ENCODE measurements at regions of chr7 and their contacts with region 1.

Region 1: GRCh38 chr7:39948956-39949928 is 814 bp upstream of the CDK13 start:
- DNase-seq: peak; percentile 98
- ATAC-seq: peak; percentile 80
- H3K4me3 ChIP-seq: peak overlapping the region; percentile 93
- H3K27ac ChIP-seq: peak overlapping the region; percentile 98
- H3K4me1 ChIP-seq: peaks cover 9% of the 10 kb centered on the region; the same call in 1 of the 2 replicates
- H3K27me3 ChIP-seq: no peaks in the 10 kb centered on the region
- CTCF ChIP-seq: no peak
- EP300 ChIP-seq: peak in 1 of 2 experiments; percentile 7; a peak in 1 of 4 replicates
- POLR2A ChIP-seq: peak; percentile 98
- RAD21 ChIP-seq: no peak

Region 2: DNA sequence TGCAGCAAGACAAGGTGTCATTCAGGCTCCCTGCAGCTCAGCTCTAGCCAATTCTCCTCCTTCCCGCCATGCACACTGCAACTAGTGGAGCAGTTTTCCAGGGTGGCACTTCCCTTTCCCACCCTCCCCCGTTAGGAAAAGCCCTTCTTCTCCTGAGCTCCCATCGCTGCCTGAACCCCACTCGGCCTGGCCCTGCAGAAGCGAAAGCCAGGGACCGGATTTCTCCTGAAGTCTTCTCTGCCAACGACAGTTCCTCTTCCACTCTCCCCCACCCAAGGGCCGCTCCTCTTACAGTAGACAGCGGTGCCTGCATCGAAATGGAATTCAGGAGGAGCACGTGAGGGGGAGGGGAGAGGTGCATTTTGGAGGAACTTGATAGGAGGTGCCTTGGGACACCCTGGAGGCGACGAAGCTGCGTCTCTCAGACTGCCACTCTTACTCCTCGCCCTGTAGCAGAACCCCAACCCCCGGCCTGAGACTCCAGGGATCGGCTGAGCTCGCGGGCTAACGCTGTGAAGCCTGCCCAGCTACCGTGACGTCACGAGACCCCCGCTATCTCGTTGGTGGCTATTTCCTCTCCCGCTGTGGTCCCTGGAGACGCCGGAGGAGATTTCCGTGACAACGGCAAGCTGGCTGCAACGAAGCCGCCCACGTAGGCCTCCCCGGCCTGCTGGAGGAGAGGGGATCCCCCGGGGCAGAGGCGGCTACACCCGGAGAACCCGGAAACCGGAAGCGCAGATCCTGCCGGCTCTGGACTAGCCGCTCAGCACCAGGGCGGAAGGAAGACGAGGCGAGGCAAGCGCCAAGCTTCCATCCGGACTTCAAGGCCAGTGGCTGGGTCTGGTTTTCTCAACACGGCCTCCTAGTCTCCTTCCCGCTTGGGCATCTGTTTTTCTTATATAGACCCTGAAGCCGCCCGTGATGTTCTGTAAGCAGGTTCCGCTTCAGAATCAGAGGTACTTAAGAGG is 216.1 kb before region 1 on chr7:
- CTCF ChIA-PET with region 1: no interaction called
- POLR2A ChIA-PET with region 1: interaction called, 5 read pairs
- RAD21 ChIA-PET with region 1: interaction called, 3 read pairs
- SMC1A ChIA-PET with region 1: no interaction called
- in situ Hi-C with region 1: no loop called
- intact Hi-C with region 1: loop called (anchors 2 kb)
- DNase-seq: peak; percentile 95
- ATAC-seq: peak; percentile 93
- H3K4me3 ChIP-seq: peak overlapping the region; percentile 77
- H3K27ac ChIP-seq: peak overlapping the region; percentile 80
- H3K4me1 ChIP-seq: peaks cover 10% of the 10 kb centered on the region
- H3K27me3 ChIP-seq: no peaks in the 10 kb centered on the region
- CTCF ChIP-seq: no peak
- EP300 ChIP-seq: peak; percentile 56 to 79
- POLR2A ChIP-seq: peak; percentile 91
- RAD21 ChIP-seq: peak; percentile 4; the same call in 1 of the 2 replicates

Region 3: DNA sequence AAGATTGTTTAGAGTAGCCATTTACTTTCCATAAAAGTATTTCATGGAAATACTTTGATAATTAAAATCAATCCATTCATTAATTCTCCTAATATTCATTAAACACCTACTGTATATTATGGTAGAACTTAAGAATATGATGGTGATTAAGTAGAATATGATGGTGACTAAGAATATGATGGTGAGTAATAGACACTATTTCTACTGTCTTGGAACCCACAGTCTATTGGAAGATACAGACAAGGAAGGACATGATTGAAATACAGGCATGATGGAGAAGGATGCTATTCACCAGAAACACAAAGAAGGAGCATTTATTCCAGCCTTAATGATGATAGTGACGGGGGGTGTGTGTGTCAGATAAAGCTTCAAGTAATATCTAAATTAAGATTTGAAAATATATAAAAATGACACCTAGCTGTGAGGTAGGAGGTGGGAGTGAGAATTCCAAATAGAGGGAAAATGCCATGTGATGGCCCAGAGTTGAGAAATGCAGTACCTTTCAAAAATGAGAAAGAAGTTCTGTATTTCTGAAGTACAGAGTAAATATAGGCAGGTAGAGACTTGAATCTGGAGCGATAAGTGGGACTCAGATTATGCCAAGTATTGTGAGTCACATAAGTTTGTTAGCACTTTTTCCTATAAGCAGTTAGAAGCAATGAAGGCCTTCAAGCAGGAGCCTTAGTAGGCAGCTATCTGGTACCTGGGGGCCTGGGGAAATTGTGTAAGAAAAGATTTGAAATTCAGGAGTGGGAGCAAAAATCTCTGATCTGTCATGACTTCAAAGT is 11.7 kb before region 1 on chr7:
- CTCF ChIA-PET with region 1: no interaction called
- POLR2A ChIA-PET with region 1: no interaction called
- RAD21 ChIA-PET with region 1: no interaction called
- SMC1A ChIA-PET with region 1: no interaction called
- in situ Hi-C with region 1: no loop called
- intact Hi-C with region 1: no loop called
- DNase-seq: no peak
- ATAC-seq: no peak
- H3K4me3 ChIP-seq: no peak overlapping the region
- H3K27ac ChIP-seq: no peak overlapping the region
- H3K4me1 ChIP-seq: no peaks in the 10 kb centered on the region
- H3K27me3 ChIP-seq: no peaks in the 10 kb centered on the region
- CTCF ChIP-seq: no peak
- EP300 ChIP-seq: no peak
- POLR2A ChIP-seq: no peak
- RAD21 ChIP-seq: no peak

Region 4: GRCh38 chr7:40057292-40057691 is 108.0 kb after region 1 on chr7:
- CTCF ChIA-PET with region 1: interaction called, 26 read pairs
- POLR2A ChIA-PET with region 1: no interaction called
- RAD21 ChIA-PET with region 1: interaction called, 10 read pairs
- SMC1A ChIA-PET with region 1: interaction called, 11 read pairs
- in situ Hi-C with region 1: no loop called
- intact Hi-C with region 1: loop called (anchors 2 kb)
- DNase-seq: no peak
- ATAC-seq: no peak
- H3K4me3 ChIP-seq: no peak overlapping the region
- H3K27ac ChIP-seq: no peak overlapping the region
- H3K4me1 ChIP-seq: no peaks in the 10 kb centered on the region
- H3K27me3 ChIP-seq: no peaks in the 10 kb centered on the region
- CTCF ChIP-seq: no peak
- EP300 ChIP-seq: no peak
- POLR2A ChIP-seq: no peak
- RAD21 ChIP-seq: no peak

Region 5: DNA sequence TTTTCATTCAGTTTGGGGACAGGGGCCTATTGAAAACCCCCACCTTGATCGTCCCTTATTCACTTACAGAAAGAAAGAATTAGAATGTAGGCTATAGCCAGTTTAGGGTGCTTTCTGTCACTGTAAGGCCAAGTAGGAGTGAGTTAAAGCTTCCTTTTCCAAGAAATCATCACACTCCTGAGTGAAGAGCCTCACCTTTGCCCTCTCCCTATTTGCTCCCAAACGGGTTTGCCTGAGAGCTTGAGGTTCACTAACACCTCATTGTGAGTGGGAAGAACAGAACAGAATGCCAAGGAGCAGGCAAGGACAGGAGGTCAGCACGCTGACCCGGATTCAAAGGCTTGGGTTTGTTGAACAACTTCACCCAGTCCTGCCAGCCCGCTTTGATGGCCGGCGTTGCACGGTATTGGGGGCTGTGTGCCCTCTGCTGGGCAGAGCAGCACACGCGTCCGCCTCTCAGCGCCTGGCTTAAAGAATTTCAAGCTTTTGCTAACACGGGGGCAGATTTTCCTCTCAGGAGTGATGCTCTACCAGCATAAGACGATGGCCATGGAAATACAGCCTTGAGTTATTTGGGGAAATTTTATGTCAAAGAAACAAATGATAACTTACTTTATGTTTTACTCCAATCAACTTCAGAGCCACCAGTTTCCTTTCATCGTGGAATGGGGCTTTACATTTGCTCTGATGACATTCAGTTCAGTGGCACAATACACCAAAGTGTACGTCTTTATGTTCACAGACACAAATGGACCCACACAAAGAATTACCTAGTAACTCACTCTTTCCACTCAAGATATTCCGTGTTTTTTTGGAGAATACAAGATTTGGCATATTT is 655.6 kb after region 1 on chr7:
- CTCF ChIA-PET with region 1: interaction called, 6 read pairs
- POLR2A ChIA-PET with region 1: no interaction called
- RAD21 ChIA-PET with region 1: interaction called, 7 read pairs
- SMC1A ChIA-PET with region 1: interaction called, 4 read pairs
- in situ Hi-C with region 1: no loop called
- intact Hi-C with region 1: loop called (anchors 5 kb)
- DNase-seq: no peak
- ATAC-seq: peak; percentile 99
- H3K4me3 ChIP-seq: no peak overlapping the region
- H3K27ac ChIP-seq: no peak overlapping the region
- H3K4me1 ChIP-seq: no peaks in the 10 kb centered on the region
- H3K27me3 ChIP-seq: no peaks in the 10 kb centered on the region
- CTCF ChIP-seq: peak; percentile 62 to 77 (median 74)
- EP300 ChIP-seq: no peak
- POLR2A ChIP-seq: no peak
- RAD21 ChIP-seq: peak; percentile 63

Region 6: GRCh38 chr7:40848541-40849221 is 899.4 kb after region 1 on chr7:
- CTCF ChIA-PET with region 1: no interaction called
- POLR2A ChIA-PET with region 1: no interaction called
- RAD21 ChIA-PET with region 1: no interaction called
- SMC1A ChIA-PET with region 1: no interaction called
- in situ Hi-C with region 1: no loop called
- intact Hi-C with region 1: loop called (anchors 5 kb)
- DNase-seq: no peak
- ATAC-seq: no peak
- H3K4me3 ChIP-seq: no peak overlapping the region
- H3K27ac ChIP-seq: no peak overlapping the region
- H3K4me1 ChIP-seq: no peaks in the 10 kb centered on the region
- H3K27me3 ChIP-seq: no peaks in the 10 kb centered on the region
- CTCF ChIP-seq: no peak
- EP300 ChIP-seq: no peak
- POLR2A ChIP-seq: no peak
- RAD21 ChIP-seq: no peak